ENCODE measurements at regions of chr1 and their contacts with region 1.

Region 1: GRCh38 chr1:220217383-220217988 is 54.8 kb downstream of the RAB3GAP2 start:
- DNase-seq: peak; percentile 68
- ATAC-seq: peak; percentile 77
- H3K4me3 ChIP-seq: no peak overlapping the region
- H3K27ac ChIP-seq: no peak overlapping the region
- H3K4me1 ChIP-seq: no peaks in the 10 kb centered on the region
- H3K27me3 ChIP-seq: no peaks in the 10 kb centered on the region
- CTCF ChIP-seq: peak; percentile 94

Region 2: GRCh38 chr1:220123889-220124288 is 93.6 kb before region 1 on chr1:
- CTCF ChIA-PET with region 1: no interaction called
- POLR2A ChIA-PET with region 1: interaction called, 10 read pairs
- intact Hi-C with region 1: no loop called
- DNase-seq: peak; percentile 27
- ATAC-seq: 0 out of 2 replicates have a peak, but pooled peaks have one; percentile 35
- H3K4me3 ChIP-seq: no peak overlapping the region
- H3K27ac ChIP-seq: no peak overlapping the region
- H3K4me1 ChIP-seq: no peaks in the 10 kb centered on the region
- H3K27me3 ChIP-seq: no peaks in the 10 kb centered on the region
- CTCF ChIP-seq: peak; percentile 59

Region 3: DNA sequence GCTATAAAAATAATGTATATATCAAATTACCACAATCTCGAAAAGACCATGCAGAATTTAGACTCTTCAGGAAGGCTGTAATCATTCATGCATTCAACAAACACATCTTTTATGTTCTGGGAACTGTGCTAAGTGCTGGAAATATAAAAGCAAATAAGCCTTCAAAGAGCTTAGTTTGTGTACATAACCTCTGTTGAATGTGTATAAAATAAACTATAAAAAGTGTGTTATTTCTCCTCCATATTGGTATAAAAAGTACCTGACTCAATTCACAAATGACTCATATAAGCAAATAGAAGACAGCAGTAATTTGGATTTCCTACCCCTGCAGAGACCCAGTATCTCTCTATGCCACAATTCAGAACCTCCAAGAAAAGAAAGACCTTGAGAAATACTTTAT is 18.0 kb after region 1 on chr1:
- CTCF ChIA-PET with region 1: interaction called, 13 read pairs
- POLR2A ChIA-PET with region 1: no interaction called
- intact Hi-C with region 1: loop called (anchors 1 kb)
- DNase-seq: peak; percentile 92
- ATAC-seq: peak; percentile 98
- H3K4me3 ChIP-seq: no peak overlapping the region; the same call in 1 of the 2 replicates
- H3K27ac ChIP-seq: peak overlapping the region; percentile 81
- H3K4me1 ChIP-seq: peaks cover 29% of the 10 kb centered on the region
- H3K27me3 ChIP-seq: no peaks in the 10 kb centered on the region
- CTCF ChIP-seq: no peak

Region 4: GRCh38 chr1:220281159-220281574 is 63.7 kb after region 1 on chr1:
- CTCF ChIA-PET with region 1: interaction called, 21 read pairs
- POLR2A ChIA-PET with region 1: no interaction called
- intact Hi-C with region 1: no loop called
- DNase-seq: peak; percentile 84
- ATAC-seq: peak; percentile 85
- H3K4me3 ChIP-seq: no peak overlapping the region
- H3K27ac ChIP-seq: no peak overlapping the region
- H3K4me1 ChIP-seq: 0 out of 2 replicates have a peak, but pooled peaks cover 4% of the 10 kb centered on the region
- H3K27me3 ChIP-seq: peaks cover 53% of the 10 kb centered on the region
- CTCF ChIP-seq: peak; percentile 94

Region 5: DNA sequence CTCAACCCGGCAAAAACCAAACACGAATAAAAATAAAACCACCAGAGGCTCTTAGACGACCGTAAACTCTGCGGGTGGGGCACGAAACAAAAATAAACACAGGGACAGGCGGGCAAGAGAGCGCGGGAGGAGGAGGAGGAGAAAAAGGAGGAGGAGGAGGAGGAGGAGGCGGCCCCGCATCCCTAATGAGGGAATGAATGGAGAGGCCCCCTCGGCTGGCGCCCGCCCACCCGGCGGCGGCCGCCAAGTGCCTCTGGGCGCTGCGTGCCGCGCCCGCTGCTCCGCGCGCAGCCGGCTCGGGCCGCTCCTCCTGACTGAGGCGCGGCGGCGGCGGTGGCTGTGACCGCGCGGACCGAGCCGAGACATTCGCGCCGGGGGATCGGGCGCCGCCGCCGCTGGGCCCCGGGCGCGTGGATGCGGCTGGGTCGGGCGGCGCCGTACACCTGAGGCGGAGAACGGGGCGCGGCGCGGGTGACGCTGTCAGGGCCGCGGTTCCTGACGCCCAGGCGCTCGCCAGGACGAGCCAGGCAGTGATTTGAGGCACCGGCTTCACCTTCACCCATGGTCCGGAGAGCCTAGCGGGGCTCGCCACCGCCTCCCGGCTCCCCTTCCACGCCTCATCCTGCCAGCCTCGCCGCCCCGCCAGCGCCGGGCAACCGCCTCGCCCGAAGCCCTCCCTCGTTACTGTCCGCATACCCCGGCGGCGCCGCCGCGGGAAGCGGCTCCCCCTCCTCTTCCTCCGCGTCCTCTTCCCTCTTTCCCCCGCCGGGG is 310.6 kb after region 1 on chr1 and contains the start of gene MARK1:
- CTCF ChIA-PET with region 1: no interaction called
- POLR2A ChIA-PET with region 1: no interaction called
- intact Hi-C with region 1: loop called (anchors 10 kb)
- DNase-seq: peak; percentile 47
- ATAC-seq: peak; percentile 73
- H3K4me3 ChIP-seq: peak within 1 kb of the TSS; percentile 69
- H3K27ac ChIP-seq: no peak within 1 kb of the TSS
- H3K4me1 ChIP-seq: peaks cover 13% of the 10 kb centered on the region; the same call in 1 of the 2 replicates
- H3K27me3 ChIP-seq: peaks cover 93% of the 10 kb centered on the region
- CTCF ChIP-seq: no peak
- total RNA-seq, gene MARK1: 0.40 and 1.5 TPM in 2 replicates